ENCODE measurements at regions of chr5 and their contacts with region 1.

Region 1: DNA sequence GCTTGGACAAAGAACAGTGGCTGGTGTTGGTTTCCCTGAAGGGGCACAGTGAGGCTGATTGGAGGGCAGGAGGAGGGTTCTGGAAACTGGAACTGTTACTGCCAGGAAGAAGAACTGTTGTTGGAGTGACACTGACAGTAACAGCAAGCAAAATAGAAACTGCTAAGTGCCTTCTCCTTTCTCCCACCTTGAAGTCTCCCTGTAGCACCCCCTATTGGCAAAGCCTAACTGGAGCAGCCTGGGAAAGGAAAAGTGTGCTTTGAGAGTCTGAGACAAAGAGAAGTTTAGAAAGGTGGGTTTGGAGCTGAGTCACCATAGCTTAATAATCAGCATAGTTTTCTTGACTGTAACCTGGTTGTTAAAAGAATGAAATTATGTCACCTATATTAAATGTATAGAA is 2.5 kb upstream of the TMEM174 start:
- DNase-seq: no peak
- H3K4me3 ChIP-seq: no peak overlapping the region
- H3K27me3 ChIP-seq: peaks cover 9% of the 10 kb centered on the region
- CTCF ChIP-seq: peak; percentile 63

Region 2: GRCh38 chr5:72949481-72949880 is 221.0 kb before region 1 on chr5:
- CTCF ChIA-PET with region 1: no interaction called
- POLR2A ChIA-PET with region 1: no interaction called
- DNase-seq: no peak
- H3K4me3 ChIP-seq: no peak overlapping the region
- H3K27me3 ChIP-seq: no peaks in the 10 kb centered on the region
- CTCF ChIP-seq: no peak

Region 3: DNA sequence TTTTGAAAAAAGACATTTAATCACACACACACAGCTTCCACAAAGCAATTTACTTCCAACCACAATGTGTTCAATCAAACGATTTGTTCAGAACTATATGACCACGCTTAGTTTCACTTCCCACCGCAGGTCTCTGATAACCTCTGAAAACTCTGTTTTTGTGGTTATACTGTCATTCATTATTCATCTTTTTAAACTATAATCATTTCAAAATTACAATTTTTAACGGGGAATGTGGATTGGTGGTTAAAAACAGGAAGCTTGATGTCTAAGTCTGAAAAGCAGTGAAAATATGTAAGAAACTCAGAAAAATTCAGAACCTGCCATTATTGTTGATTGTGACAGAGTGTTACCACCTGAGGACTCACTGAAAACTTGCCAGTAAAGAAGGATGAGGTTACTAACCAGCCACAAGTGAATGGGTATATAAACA is 10.3 kb before region 1 on chr5:
- CTCF ChIA-PET with region 1: interaction called, 11 read pairs
- POLR2A ChIA-PET with region 1: no interaction called
- DNase-seq: no peak
- H3K4me3 ChIP-seq: no peak overlapping the region
- H3K27me3 ChIP-seq: peaks cover 2% of the 10 kb centered on the region; the same call in 1 of the 2 replicates
- CTCF ChIP-seq: no peak

Measured in BJ (cell line).